ENCODE measurements at regions of chr9 and their contacts with region 1.

Region 1: GRCh38 chr9:37485389-37486219 is at the start of gene POLR1E:
- DNase-seq: peak; percentile 98
- ATAC-seq: peak; percentile 97
- H3K4me3 Mint-ChIP-seq: peak within 1 kb of the TSS; percentile 94
- H3K27ac Mint-ChIP-seq: peak within 1 kb of the TSS; percentile 93
- H3K4me1 Mint-ChIP-seq: peaks cover 41% of the 10 kb centered on the region
- H3K27me3 Mint-ChIP-seq: peaks cover 7% of the 10 kb centered on the region
- total RNA-seq, gene POLR1E: 67.5 to 69.2 TPM

Region 2: DNA sequence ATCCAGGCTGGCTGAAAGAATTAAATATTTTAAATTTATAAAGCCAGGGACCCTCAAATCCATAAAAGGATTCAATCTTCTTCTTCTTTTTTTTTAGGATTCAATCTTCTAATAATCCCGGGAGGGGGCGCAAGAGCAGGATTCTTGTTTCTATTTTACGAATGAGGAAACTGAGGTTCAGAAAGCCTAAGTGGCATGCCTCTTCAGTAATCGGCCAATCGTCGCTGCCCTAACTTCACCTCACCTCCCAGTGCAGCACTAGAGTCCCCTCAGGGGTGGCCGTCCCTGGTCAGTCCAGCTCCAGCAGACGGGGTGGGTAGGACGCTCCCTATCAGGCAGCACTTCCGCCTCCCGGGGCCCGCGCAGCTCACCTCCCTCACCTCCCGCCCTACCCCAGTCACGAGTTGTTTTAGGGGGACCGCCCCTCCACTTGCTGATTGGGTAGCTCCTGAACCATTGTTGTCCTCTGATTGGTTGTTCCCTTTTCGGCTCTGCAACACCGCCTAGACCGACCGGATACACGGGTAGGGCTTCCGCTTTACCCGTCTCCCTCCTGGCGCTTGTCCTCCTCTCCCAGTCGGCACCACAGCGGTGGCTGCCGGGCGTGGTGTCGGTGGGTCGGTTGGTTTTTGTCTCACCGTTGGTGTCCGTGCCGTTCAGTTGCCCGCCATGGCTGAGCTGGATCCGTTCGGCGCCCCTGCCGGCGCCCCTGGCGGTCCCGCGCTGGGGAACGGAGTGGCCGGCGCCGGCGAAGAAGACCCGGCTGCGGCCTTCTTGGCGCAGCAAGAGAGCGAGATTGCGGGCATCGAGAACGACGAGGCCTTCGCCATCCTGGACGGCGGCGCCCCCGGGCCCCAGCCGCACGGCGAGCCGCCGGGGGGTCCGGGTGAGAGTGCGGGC is 1295.0 kb before region 1 on chr9 and contains the start of gene CLTA:
- CTCF ChIA-PET with region 1: no interaction called
- POLR2A ChIA-PET with region 1: no interaction called
- intact Hi-C with region 1: loop called in 1 of 2 experiments (anchors 10 kb)
- DNase-seq: peak; percentile 96
- ATAC-seq: peak; percentile 99
- H3K4me3 Mint-ChIP-seq: peak within 1 kb of the TSS; percentile 95
- H3K27ac Mint-ChIP-seq: peak within 1 kb of the TSS; percentile 88
- H3K4me1 Mint-ChIP-seq: peaks cover 45% of the 10 kb centered on the region
- H3K27me3 Mint-ChIP-seq: no peaks in the 10 kb centered on the region
- total RNA-seq, gene CLTA: 123 to 133 TPM

Region 3: GRCh38 chr9:37079370-37080164 is 406.0 kb before region 1 on chr9:
- CTCF ChIA-PET with region 1: no interaction called
- POLR2A ChIA-PET with region 1: no interaction called
- intact Hi-C with region 1: loop called in 1 of 2 experiments (anchors 1 kb)
- DNase-seq: peak; percentile 97
- ATAC-seq: peak; percentile 98
- H3K4me3 Mint-ChIP-seq: peak overlapping the region; percentile 94
- H3K27ac Mint-ChIP-seq: peak overlapping the region; percentile 96
- H3K4me1 Mint-ChIP-seq: peaks cover 42% of the 10 kb centered on the region
- H3K27me3 Mint-ChIP-seq: peaks cover 3% of the 10 kb centered on the region

Region 4: GRCh38 chr9:37422289-37423104 is 63.1 kb before region 1 on chr9 and contains the start of gene GRHPR:
- CTCF ChIA-PET with region 1: no interaction called
- POLR2A ChIA-PET with region 1: no interaction called
- intact Hi-C with region 1: loop called (anchors 1 kb)
- DNase-seq: peak; percentile 95
- ATAC-seq: peak; percentile 99
- H3K4me3 Mint-ChIP-seq: peak within 1 kb of the TSS; percentile 91
- H3K27ac Mint-ChIP-seq: peak within 1 kb of the TSS; percentile 95
- H3K4me1 Mint-ChIP-seq: peaks cover 25% of the 10 kb centered on the region
- H3K27me3 Mint-ChIP-seq: no peaks in the 10 kb centered on the region
- total RNA-seq, gene GRHPR: 69.1 to 74.4 TPM

Region 5: GRCh38 chr9:37555786-37556185 is 70.2 kb after region 1 on chr9:
- CTCF ChIA-PET with region 1: no interaction called
- POLR2A ChIA-PET with region 1: no interaction called
- intact Hi-C with region 1: no loop called
- DNase-seq: no peak
- ATAC-seq: no peak
- H3K4me3 Mint-ChIP-seq: no peak overlapping the region
- H3K27ac Mint-ChIP-seq: no peak overlapping the region
- H3K4me1 Mint-ChIP-seq: no peaks in the 10 kb centered on the region
- H3K27me3 Mint-ChIP-seq: no peaks in the 10 kb centered on the region

Region 6: GRCh38 chr9:37650873-37651768 is 165.5 kb after region 1 on chr9 and contains the start of gene FRMPD1:
- CTCF ChIA-PET with region 1: no interaction called
- POLR2A ChIA-PET with region 1: no interaction called
- intact Hi-C with region 1: loop called in 1 of 2 experiments (anchors 1 kb)
- DNase-seq: peak; percentile 78
- ATAC-seq: peak; percentile 97
- H3K4me3 Mint-ChIP-seq: peak within 1 kb of the TSS; percentile 63
- H3K27ac Mint-ChIP-seq: no peak within 1 kb of the TSS
- H3K4me1 Mint-ChIP-seq: peaks cover 9% of the 10 kb centered on the region
- H3K27me3 Mint-ChIP-seq: peaks cover 56% of the 10 kb centered on the region
- total RNA-seq, gene FRMPD1: not detected

Region 7: DNA sequence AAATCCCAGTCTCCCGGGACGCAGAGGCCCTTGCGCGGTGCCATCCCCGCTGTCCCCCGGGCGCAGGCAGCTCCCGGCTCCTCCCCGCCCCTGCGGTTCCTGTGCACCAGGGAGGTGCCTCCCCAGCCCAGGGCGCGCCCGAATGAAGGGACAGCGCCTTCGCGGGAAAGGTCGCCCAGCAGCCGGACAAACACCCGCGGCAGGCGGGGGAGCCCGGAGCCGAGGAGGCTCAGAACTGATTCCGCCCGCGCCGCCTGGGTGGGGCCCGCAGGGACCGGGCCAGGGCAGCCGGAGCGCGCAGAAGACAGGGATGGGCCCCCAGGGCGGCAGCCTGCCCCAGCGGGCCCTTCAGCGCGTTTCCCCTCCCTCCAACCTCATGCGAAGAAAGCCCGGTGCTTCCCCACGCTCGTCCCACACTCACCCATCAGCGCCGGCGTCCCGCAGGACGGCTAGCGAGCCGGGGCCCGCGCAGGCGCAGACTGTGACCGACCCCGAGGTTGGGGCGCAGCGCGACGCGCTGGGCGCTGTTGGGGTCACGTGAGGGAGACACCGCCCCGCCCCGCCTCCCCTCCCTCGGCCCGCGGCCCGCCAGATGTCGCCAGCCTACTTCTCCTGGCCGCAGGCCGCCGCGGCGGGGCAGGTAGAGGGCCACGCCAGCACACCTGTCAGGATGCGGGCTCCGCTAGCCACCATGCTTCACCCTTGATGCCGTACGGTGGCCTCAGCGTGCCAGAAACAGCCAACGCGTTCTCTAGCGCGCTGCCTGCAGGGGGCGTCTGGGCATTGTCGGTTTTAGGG is 418.2 kb after region 1 on chr9 and contains the start of gene SLC25A51:
- CTCF ChIA-PET with region 1: interaction called, 5 read pairs
- POLR2A ChIA-PET with region 1: no interaction called
- intact Hi-C with region 1: loop called (anchors 1 to 10 kb)
- DNase-seq: peak; percentile 96
- ATAC-seq: peak; percentile 86
- H3K4me3 Mint-ChIP-seq: peak within 1 kb of the TSS; percentile 85
- H3K27ac Mint-ChIP-seq: peak within 1 kb of the TSS; percentile 89
- H3K4me1 Mint-ChIP-seq: peaks cover 11% of the 10 kb centered on the region
- H3K27me3 Mint-ChIP-seq: no peaks in the 10 kb centered on the region
- total RNA-seq, gene SLC25A51: 25.5 to 29.4 TPM

Measured in activated CD4-positive, alpha-beta T cell treated with anti-CD3 and anti-CD28 coated beads for 36 hours (primary cell).